Activated T-helper 2 cell treated with anti-CD3 and anti-CD28 coated beads, Interferon-gamma antibody, Interleukin-2, Interleukin-4, amounts not matched to agents 10 μg/mL and 5 μg/mL and 100 μg/mL, durations not matched to agents 14 hours and 24 hours and 36 hours (primary cell): ENCODE measurements at regions of chr12 and their contacts with region 1.

Region 1: DNA sequence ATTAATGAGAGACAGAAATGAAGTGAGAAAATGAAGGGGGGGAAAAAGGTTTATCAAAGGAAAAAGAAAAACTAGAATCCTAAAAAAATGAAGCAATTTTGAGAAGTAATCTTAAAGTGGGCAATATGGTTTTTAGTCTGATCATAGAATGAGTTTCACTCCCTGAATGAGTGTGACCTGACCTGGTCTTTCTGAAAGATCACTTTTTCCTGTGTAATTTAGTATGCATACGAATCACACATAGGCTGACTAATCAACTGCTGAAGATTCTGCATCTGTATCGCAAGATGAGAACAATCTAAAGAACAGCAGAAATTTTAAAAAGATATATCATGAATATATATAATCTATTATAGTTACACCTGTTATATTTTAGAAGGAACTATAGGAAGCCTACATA is 11.3 kb downstream of the GNPTAB start:
- DNase-seq: no peak
- H3K4me3 Mint-ChIP-seq: peak overlapping the region; percentile 53
- H3K27ac Mint-ChIP-seq: peak overlapping the region; percentile 95
- H3K4me1 Mint-ChIP-seq: peaks cover 58% of the 10 kb centered on the region
- H3K27me3 Mint-ChIP-seq: no peaks in the 10 kb centered on the region

Region 2: DNA sequence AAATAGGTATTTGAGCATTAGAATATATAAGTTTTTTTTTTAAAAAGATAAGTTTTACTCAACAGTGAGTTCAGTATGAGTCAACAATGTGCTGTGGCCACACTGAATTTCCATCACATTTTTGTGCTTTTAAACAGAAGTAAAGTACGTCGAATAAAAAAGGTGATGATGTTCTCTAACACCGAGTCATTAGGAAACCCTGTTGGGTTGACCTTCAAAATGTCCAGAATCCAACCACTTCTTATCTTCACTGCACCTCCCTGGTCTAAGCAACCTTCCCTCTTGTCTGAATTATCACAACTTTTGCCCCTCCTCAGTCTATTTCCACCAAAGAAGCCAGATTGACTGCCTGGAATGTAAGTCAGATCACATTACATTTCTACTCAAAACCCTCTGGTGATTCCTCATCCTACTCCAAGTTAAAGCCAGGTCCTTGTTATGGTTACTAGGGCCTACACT is 37.2 kb before region 1 on chr12:
- intact Hi-C with region 1: loop called (anchors 1 kb)
- DNase-seq: no peak
- H3K4me3 Mint-ChIP-seq: peak overlapping the region; percentile 0
- H3K27ac Mint-ChIP-seq: peak overlapping the region; percentile 92
- H3K4me1 Mint-ChIP-seq: peaks cover 66% of the 10 kb centered on the region
- H3K27me3 Mint-ChIP-seq: no peaks in the 10 kb centered on the region

Region 3: DNA sequence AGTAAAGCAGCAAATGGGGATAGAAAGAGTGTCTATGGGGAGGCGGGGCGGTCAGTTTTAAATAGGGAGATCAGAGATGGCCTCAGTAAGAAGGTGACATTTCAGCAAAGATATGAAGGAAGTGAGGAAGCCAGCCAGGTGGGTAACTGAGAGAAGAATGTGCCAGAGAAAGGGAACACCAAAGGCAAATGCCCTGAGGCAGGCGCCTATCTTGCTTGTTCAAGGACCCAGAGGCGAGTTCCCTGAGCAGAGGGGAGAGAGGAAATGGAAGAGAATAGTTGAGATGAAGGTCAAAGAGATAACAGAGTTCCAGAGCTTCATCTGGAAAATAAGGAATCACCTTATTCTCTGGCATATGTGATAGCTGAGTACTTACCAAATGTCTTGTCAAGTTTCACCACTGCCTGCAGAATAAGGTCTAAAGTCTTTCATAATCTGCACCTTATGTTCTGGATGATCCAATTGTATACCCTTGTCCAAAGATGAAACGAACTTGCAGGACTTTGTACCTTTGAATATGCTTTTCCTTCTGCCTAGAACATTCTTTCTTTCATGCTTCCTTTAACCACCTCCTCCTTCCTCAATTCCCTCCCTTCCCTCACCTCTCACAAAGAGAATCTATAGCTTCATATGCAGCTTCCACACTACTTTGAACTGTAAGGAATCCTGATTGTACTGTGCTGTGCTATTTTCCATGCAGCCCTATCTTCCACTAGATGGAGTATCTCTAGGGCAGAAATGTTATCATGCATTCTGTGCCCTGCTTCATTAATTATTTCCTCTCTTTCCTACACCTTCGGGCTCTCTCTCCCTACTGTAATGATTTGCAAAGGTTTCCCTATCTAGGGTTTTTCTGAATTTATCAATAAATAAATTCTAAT is 27.2 kb before region 1 on chr12:
- intact Hi-C with region 1: loop called (anchors 1 kb)
- DNase-seq: no peak
- H3K4me3 Mint-ChIP-seq: no peak overlapping the region
- H3K27ac Mint-ChIP-seq: peak overlapping the region; percentile 79
- H3K4me1 Mint-ChIP-seq: peaks cover 50% of the 10 kb centered on the region
- H3K27me3 Mint-ChIP-seq: no peaks in the 10 kb centered on the region

Region 4: GRCh38 chr12:101799774-101800173 is 19.7 kb before region 1 on chr12:
- intact Hi-C with region 1: loop called (anchors 1 kb)
- DNase-seq: no peak
- H3K4me3 Mint-ChIP-seq: no peak overlapping the region
- H3K27ac Mint-ChIP-seq: peak overlapping the region; percentile 56
- H3K4me1 Mint-ChIP-seq: peaks cover 47% of the 10 kb centered on the region
- H3K27me3 Mint-ChIP-seq: no peaks in the 10 kb centered on the region

Region 5: DNA sequence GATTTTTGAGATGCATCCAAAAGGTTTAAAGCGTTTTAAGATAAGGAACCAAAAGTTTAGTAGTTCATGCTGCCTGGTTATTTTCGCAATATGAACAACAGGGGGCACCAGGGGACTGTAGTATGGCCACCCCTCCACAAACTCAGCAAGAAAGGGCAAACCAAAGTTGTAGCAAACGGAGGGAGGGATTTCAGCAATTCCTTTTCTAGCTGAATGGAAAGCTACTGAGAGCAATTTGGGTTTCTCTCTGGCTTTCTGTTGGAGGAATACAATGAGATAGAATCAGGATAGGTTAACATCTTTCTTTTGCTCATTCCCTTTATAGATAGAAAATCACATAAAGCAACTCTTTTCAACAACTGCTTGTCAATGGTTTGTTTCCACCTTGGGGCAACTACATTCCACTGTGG is 120.4 kb after region 1 on chr12:
- intact Hi-C with region 1: no loop called
- DNase-seq: peak; percentile 49
- H3K4me3 Mint-ChIP-seq: no peak overlapping the region
- H3K27ac Mint-ChIP-seq: no peak overlapping the region
- H3K4me1 Mint-ChIP-seq: peaks cover 40% of the 10 kb centered on the region
- H3K27me3 Mint-ChIP-seq: peaks cover 2% of the 10 kb centered on the region